PC-9 (cell line): ENCODE measurements at regions of chr17 and their contacts with region 1.

Region 1: GRCh38 chr17:16380640-16381495 is at the start of gene UBB:
- DNase-seq: peak; percentile 90 to 97
- H3K4me3 ChIP-seq: peak within 1 kb of the TSS; percentile 97
- H3K27ac ChIP-seq: peak within 1 kb of the TSS; percentile 87
- H3K4me1 ChIP-seq: peaks cover 31% of the 10 kb centered on the region
- H3K27me3 ChIP-seq: no peaks in the 10 kb centered on the region
- CTCF ChIP-seq: no peak
- total RNA-seq, gene UBB: 2,044 and 2,361 TPM in 2 replicates

Region 2: GRCh38 chr17:16108386-16108785 is 272.5 kb before region 1 on chr17:
- CTCF ChIA-PET with region 1: no interaction called
- POLR2A ChIA-PET with region 1: no interaction called
- intact Hi-C with region 1: no loop called
- DNase-seq: no peak
- H3K4me3 ChIP-seq: no peak overlapping the region
- H3K27ac ChIP-seq: no peak overlapping the region
- H3K4me1 ChIP-seq: no peaks in the 10 kb centered on the region
- H3K27me3 ChIP-seq: no peaks in the 10 kb centered on the region
- CTCF ChIP-seq: no peak

Region 3: DNA sequence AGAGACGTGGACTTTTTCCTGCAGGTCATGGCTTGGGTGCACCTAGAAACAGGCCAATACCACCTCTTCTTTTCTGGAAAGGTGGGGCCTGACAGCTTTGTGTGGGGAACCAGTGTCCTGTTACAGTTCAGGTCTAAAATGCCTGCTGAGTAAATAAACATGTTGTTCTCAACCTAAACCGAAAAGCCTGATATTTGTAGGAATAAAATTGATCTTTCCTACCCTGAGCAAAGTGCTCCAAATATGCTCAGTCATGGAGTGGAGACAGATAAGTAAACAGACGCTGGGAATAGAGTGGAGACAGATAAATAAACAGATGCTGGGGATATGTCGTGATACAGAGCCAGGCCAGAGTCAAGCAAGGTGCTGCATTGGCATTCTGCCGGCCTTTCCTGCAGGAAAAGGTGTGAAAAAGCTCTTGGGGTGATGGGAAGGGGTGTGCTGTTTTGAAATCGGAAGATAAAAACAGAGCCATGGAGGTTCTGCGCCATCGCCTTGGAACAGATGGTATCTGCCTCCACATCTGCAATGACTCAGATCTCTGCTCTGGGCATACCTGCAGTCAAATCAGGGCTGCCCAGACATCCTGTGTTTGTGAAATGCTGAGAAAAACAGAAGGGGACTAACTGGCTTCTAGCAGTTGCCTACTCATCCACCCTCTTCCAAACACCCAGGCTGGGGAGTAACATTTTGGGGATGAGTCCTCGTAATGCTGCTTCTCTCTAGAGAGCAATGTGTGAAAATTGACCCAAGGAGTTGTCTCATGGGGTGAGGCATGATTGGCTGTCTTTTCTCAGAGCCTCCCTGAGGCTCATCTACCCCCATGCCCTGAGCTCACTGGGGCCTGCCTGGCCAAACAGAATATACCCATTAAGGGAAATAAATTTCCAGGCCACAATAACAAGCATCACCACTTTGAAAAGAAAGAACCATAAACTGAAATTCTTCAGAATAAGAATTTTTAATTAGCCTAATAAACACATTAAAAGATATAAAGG is 17.7 kb after region 1 on chr17:
- CTCF ChIA-PET with region 1: interaction called, 13 read pairs
- POLR2A ChIA-PET with region 1: interaction called, 16 read pairs
- intact Hi-C with region 1: no loop called
- DNase-seq: peak; percentile 75 to 76
- H3K4me3 ChIP-seq: no peak overlapping the region
- H3K27ac ChIP-seq: peak overlapping the region; percentile 48
- H3K4me1 ChIP-seq: peaks cover 9% of the 10 kb centered on the region
- H3K27me3 ChIP-seq: no peaks in the 10 kb centered on the region
- CTCF ChIP-seq: no peak

Region 4: DNA sequence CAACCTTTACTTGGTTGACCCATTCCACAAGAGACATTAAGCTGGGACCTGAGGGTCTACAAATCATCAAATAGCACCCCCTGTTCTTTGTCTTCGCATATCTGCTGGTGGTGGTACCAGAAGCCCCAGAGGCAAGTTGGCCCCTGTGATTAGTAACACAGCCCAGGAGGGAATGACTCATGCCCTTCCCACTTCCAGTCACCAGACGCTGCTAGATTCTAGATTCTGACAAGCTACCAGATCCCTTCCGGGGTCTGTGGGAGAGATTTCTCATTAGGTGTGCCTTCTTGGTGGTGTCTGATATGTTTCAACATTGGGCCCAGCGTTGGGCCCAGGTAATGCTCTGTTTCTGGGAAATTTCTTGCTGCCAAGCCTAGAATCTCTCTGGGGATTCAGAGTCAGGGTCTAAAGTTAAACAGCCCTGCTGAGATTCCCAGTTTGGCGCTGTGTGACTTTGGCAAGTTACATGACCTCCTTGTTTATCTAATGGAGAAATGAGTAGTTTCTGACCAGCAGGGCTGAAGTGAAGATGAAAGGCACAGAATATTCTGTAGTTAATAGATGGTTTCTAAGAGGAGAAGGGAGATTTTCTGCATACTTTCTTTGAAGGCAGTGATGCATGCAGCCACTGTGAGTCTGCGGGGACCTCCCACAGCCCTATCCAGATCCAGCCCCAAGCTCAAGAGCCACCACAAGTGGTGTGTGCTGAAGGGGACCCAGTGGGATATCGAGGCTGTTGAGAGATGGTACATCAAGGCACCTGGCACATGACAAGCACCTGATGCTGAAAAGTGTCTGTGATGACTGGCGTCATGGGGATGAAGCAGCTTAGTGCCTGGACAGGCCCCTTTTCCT is 38.4 kb after region 1 on chr17:
- CTCF ChIA-PET with region 1: no interaction called
- POLR2A ChIA-PET with region 1: no interaction called
- intact Hi-C with region 1: loop called (anchors 1 kb)
- DNase-seq: peak; percentile 66 to 81
- H3K4me3 ChIP-seq: peak overlapping the region; percentile 22; the same call in 1 of the 2 replicates
- H3K27ac ChIP-seq: peak overlapping the region; percentile 71
- H3K4me1 ChIP-seq: peaks cover 38% of the 10 kb centered on the region
- H3K27me3 ChIP-seq: no peaks in the 10 kb centered on the region
- CTCF ChIP-seq: no peak

Region 5: GRCh38 chr17:16521070-16521727 is 140.3 kb after region 1 on chr17:
- CTCF ChIA-PET with region 1: interaction called, 3 read pairs
- POLR2A ChIA-PET with region 1: no interaction called
- intact Hi-C with region 1: loop called (anchors 2 kb)
- DNase-seq: peak; percentile 76 to 77
- H3K4me3 ChIP-seq: no peak overlapping the region
- H3K27ac ChIP-seq: no peak overlapping the region
- H3K4me1 ChIP-seq: peaks cover 13% of the 10 kb centered on the region
- H3K27me3 ChIP-seq: no peaks in the 10 kb centered on the region
- CTCF ChIP-seq: peak; percentile 86